ENCODE measurements at regions of chr6 and their contacts with region 1.

Region 1: DNA sequence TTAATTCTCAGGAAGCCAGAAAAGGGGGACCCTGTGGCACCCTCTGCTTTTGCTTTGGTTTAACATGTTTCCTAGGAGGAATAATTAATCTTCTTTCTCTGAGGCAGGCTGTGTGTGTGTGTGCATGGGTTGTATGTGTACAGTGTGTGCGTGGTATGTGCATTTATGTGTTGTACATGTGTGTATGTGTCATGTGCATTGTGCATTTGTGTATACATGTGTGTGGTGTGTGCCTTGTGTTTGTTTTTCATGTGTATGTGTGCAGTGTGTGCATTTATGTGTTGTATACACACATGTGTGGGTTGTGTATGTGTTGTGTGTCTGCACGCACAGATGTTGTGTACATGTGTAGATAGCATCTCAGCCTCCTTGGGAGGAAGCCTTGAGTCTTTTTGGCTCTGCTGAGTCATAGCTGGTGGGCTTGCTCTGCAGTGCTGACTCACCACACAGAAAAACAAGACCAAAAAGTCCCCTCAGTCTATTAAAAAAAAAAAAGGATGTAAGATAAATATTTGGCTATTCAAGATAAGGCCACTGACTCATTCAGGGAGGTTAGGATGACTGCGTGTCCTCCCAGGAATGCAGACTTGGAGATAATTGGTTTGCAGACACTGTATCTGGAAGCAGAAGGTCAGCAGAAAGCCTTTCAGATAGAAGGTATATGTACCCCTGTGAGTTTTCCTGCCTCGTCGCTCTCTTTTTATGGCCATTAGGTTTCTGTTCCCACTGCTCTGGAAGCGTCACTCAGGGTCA is 58.6 kb downstream of the SYNJ2 start:
- DNase-seq: peak; percentile 99
- H3K4me3 ChIP-seq: no peak overlapping the region
- H3K27ac ChIP-seq: peak overlapping the region; percentile 99
- H3K4me1 ChIP-seq: peaks cover 38% of the 10 kb centered on the region
- H3K27me3 ChIP-seq: no peaks in the 10 kb centered on the region
- CTCF ChIP-seq: no peak
- POLR2A ChIP-seq: peak; percentile 89

Region 2: GRCh38 chr6:157379656-157380454 is 660.4 kb before region 1 on chr6:
- CTCF ChIA-PET with region 1: no interaction called
- POLR2A ChIA-PET with region 1: no interaction called
- dilution Hi-C with region 1: no loop called
- intact Hi-C with region 1: no loop called
- DNase-seq: peak; percentile 91
- H3K4me3 ChIP-seq: peak overlapping the region; percentile 61 to 97 (median 74)
- H3K27ac ChIP-seq: peak overlapping the region; percentile 60
- H3K4me1 ChIP-seq: peaks cover 18% of the 10 kb centered on the region
- H3K27me3 ChIP-seq: no peaks in the 10 kb centered on the region
- CTCF ChIP-seq: no peak
- POLR2A ChIP-seq: no peak

Region 3: DNA sequence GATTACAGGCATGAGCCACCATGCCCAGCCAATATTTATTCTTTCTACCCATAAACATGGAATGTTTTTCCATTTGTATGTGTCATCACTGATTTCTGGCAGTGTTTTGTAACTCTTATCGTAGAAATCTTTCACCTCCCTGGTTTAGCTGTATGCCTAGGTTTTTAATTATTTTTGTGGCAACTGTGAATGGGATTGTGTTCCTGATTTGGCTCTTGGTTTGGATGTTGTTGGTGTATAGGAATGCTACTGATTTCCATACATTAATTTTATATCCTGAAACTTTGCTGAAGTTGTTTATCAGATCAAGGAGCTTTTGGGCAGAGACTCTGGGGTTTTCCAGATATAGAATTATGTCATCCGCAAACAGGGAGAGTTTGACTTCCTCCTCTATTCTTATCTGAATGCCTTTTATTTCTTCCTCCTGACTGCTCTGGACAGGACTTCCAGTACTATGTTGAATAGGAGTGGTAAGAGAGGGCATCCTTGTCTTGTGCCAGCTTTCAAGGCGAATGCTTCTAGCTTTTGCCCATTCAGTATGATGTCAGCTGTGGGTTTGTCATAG is 460.7 kb before region 1 on chr6:
- CTCF ChIA-PET with region 1: no interaction called
- POLR2A ChIA-PET with region 1: no interaction called
- dilution Hi-C with region 1: no loop called
- intact Hi-C with region 1: no loop called
- DNase-seq: peak; percentile 90
- H3K4me3 ChIP-seq: no peak overlapping the region
- H3K27ac ChIP-seq: peak overlapping the region; percentile 74
- H3K4me1 ChIP-seq: peaks cover 21% of the 10 kb centered on the region
- H3K27me3 ChIP-seq: no peaks in the 10 kb centered on the region
- CTCF ChIP-seq: no peak
- POLR2A ChIP-seq: no peak

Region 4: DNA sequence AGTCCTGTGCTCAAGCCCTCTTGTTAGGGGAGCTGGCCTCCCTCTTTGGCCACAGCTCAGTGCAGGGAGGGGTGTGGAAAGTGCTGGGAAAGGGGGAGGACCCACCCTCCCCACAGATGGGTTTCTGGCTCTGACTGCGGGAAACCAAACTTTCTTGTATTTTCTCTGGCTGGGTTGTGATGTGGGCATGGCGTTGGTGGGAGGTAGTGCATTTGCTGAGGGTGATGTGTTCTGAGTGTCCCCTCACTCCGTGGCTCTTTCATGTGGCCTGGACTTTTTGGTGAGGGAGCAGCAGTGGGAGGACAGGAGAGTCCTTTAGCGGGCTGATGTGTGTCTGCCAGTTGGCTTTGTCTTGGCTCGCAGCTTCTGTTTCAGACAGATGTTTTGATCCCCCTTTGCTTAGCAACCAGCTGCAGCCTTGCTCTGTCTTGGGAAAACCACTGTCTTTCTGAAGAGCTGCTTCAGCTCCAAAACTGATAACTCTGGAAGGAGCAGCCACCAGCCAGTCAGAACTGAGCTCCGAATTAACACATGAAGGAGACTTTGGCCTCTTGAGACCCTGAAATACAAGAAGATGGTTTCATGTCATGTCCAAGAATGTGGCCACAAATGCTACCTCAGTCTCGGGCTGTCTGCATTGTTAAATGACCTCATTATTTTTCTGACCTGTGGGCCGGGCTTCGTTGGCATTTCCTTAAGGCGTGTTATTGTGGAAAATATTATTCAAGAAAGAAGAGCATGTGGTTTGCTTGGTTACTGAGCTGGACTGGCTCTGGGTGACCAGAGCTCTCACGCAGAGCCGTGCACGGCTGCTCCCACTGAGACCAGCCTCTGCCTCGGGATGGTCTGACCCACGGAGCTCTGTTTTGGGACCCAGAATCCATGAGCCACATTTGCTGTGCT is 37.0 kb before region 1 on chr6:
- CTCF ChIA-PET with region 1: interaction called, 8 read pairs
- POLR2A ChIA-PET with region 1: interaction called, 5 read pairs
- dilution Hi-C with region 1: no loop called
- intact Hi-C with region 1: loop called (anchors 1 kb)
- DNase-seq: peak; percentile 97
- H3K4me3 ChIP-seq: no peak overlapping the region
- H3K27ac ChIP-seq: peak overlapping the region; percentile 91
- H3K4me1 ChIP-seq: peaks cover 32% of the 10 kb centered on the region
- H3K27me3 ChIP-seq: no peaks in the 10 kb centered on the region
- CTCF ChIP-seq: no peak
- POLR2A ChIP-seq: peak; percentile 43

Region 5: DNA sequence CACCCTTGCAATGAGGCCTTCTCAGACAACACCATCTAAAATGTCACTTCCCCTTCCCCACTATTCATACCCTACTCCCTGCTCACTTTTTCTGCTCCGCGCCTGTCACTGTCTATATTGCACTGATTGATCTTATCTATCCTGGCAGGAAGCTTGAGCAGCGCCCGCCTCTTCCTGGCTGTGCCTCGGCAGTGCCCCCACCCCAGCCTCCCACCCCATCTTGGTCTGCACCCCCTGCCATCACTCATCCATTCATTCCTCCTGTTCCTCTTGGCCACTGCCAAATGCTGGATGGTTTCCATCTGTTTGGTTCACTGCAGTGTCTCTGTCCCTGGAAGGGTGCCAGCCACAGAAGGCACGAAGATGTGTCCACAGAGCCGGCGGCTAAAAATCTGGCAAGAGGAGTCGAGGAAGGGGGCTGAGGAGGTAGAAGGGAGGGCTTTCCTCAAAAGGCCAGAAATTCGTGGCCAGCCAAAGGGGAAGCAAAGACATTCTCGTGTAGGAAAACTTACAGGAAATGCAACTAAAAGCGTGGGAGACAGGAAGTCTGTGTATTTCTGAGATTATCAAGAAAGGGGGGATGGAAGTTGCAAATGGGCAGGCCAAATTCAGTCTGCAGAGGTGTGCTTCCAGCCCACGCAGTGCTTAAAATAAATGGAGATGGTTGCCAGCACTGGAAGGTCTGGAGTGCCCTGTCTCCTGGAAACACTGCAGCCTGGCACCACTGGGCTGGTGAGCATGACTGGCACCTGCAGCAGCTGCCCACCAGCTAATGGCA is 30.9 kb before region 1 on chr6:
- CTCF ChIA-PET with region 1: interaction called, 8 read pairs
- POLR2A ChIA-PET with region 1: no interaction called
- dilution Hi-C with region 1: no loop called
- intact Hi-C with region 1: loop called (anchors 1 kb)
- DNase-seq: peak; percentile 89
- H3K4me3 ChIP-seq: no peak overlapping the region
- H3K27ac ChIP-seq: peak overlapping the region; percentile 79
- H3K4me1 ChIP-seq: peaks cover 48% of the 10 kb centered on the region
- H3K27me3 ChIP-seq: no peaks in the 10 kb centered on the region
- CTCF ChIP-seq: no peak
- POLR2A ChIP-seq: no peak

Region 6: DNA sequence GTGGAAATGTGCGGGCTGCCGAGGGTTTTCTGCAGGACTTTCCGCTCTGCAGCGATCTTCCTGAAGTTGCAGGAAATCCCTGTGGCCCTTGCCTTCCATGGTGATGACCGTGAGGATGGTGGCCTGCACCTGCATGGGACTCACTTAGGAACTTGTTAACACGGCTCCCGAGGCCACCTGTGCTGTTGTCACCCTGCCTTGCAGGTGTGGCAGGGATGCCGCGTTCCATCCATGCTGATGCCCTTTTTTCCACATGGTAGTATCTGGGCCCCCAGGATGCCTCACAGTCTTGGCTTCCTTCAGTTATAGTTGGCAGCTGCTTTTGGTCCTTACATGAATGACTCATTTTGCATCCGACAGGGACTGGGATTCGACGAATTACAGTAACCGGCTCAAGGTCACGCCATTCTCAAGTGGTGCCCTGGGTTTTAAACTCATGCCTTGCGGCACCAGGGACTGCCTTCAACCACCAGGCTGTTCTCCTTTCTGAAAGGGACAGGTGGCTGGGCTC is 21.3 kb before region 1 on chr6:
- CTCF ChIA-PET with region 1: interaction called, 3 read pairs
- POLR2A ChIA-PET with region 1: interaction called, 10 read pairs
- dilution Hi-C with region 1: no loop called
- intact Hi-C with region 1: no loop called
- DNase-seq: peak; percentile 89
- H3K4me3 ChIP-seq: no peak overlapping the region
- H3K27ac ChIP-seq: peak overlapping the region; percentile 85
- H3K4me1 ChIP-seq: peaks cover 54% of the 10 kb centered on the region
- H3K27me3 ChIP-seq: no peaks in the 10 kb centered on the region
- CTCF ChIP-seq: no peak
- POLR2A ChIP-seq: no peak

Region 7: GRCh38 chr6:158026054-158026900 is 13.9 kb before region 1 on chr6:
- CTCF ChIA-PET with region 1: interaction called, 45 read pairs
- POLR2A ChIA-PET with region 1: interaction called, 3 read pairs
- dilution Hi-C with region 1: no loop called
- intact Hi-C with region 1: loop called (anchors 1 kb)
- DNase-seq: peak; percentile 98
- H3K4me3 ChIP-seq: no peak overlapping the region
- H3K27ac ChIP-seq: peak overlapping the region; percentile 83
- H3K4me1 ChIP-seq: peaks cover 32% of the 10 kb centered on the region
- H3K27me3 ChIP-seq: no peaks in the 10 kb centered on the region
- CTCF ChIP-seq: peak; percentile 74 to 90
- POLR2A ChIP-seq: no peak

Region 8: GRCh38 chr6:158060455-158061360 is 20.5 kb after region 1 on chr6:
- CTCF ChIA-PET with region 1: interaction called, 16 read pairs
- POLR2A ChIA-PET with region 1: interaction called, 7 read pairs
- dilution Hi-C with region 1: no loop called
- intact Hi-C with region 1: loop called (anchors 1 kb)
- DNase-seq: peak; percentile 92
- H3K4me3 ChIP-seq: no peak overlapping the region
- H3K27ac ChIP-seq: peak overlapping the region; percentile 99
- H3K4me1 ChIP-seq: peaks cover 62% of the 10 kb centered on the region
- H3K27me3 ChIP-seq: no peaks in the 10 kb centered on the region
- CTCF ChIP-seq: no peak
- POLR2A ChIP-seq: no peak

Measured in endothelial cell of umbilical vein (primary cell).